ENCODE measurements at regions of chr12 and their contacts with region 1.

Region 1: DNA sequence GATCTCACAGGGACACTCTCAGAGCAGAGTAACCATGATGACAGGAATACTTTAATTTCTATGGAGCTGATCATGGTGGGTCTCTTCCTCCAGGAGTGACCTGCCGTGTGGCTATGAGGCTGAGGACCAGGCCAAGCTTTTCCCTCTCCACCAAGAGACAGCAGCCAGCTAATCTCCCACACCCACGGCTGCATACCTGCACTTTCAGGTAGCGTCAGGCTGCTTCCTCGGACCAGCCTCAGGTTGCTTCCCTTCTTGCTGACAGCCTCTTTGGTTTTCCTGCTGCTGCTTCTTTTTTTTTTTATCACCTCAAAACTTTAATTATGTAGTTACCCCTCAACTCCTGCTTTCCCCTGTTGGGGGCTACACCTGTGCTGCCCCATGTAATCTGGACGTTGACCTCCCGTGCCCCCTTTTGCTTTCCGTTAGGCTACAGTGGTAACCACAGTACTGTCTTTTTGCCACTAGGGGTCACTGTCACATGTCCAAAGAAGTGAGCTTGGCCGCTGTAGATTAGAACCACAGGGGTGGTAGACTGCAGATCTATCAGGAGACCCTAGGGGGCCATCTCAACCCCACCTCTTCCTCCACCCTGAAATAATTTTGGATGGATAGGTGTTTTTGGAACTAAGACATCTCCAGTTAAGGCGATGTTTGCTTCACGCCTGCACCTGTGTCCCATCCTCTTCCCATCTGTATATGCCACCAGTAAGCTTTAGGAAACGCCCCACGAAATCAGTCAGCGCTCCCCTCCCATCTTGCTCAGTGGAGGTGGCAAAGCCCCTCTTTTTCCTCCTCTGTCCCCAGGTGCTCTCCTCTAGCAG is 7.8 kb upstream of the PIP4K2C start:
- DNase-seq: peak; percentile 83
- ATAC-seq: peak; percentile 100
- H3K4me3 Mint-ChIP-seq: no peak overlapping the region
- H3K27ac Mint-ChIP-seq: no peak overlapping the region
- H3K4me1 Mint-ChIP-seq: no peaks in the 10 kb centered on the region
- H3K27me3 Mint-ChIP-seq: no peaks in the 10 kb centered on the region
- CTCF ChIP-seq: peak; percentile 96

Region 2: GRCh38 chr12:57229634-57230380 is 353.4 kb before region 1 on chr12 and contains the start of gene SHMT2:
- CTCF ChIA-PET with region 1: no interaction called
- POLR2A ChIA-PET with region 1: no interaction called
- intact Hi-C with region 1: no loop called
- DNase-seq: peak; percentile 97
- ATAC-seq: peak; percentile 68
- H3K4me3 Mint-ChIP-seq: peak within 1 kb of the TSS; percentile 100
- H3K27ac Mint-ChIP-seq: peak within 1 kb of the TSS; percentile 99
- H3K4me1 Mint-ChIP-seq: peaks cover 74% of the 10 kb centered on the region
- H3K27me3 Mint-ChIP-seq: peaks cover 22% of the 10 kb centered on the region
- CTCF ChIP-seq: no peak
- total RNA-seq, gene SHMT2: 480 to 529 TPM

Region 3: DNA sequence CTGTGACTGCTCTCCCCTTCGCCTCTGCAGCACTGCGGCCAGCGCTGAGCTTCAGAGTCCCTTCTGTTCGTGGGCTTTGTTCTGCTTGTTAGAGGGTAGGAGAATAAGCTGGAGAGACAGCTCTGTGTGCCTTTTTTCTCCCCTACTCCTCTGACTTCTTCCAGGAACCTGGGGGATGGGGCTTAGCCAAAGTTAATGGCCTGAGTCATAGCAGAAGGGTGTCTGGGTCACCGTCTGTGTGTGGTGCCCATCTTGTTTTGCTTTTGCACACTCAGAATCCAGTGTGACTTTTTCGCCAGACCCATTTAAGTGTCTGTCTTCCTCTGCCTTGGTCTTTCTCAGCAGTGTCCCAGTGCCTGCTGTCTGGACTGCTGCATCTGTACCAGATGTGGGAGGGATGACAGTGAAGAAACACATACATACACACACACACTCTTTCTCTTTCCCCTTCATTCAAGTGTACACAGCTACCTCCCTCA is 30.3 kb before region 1 on chr12:
- CTCF ChIA-PET with region 1: interaction called, 16 read pairs
- POLR2A ChIA-PET with region 1: no interaction called
- intact Hi-C with region 1: no loop called
- DNase-seq: no peak
- ATAC-seq: no peak
- H3K4me3 Mint-ChIP-seq: no peak overlapping the region
- H3K27ac Mint-ChIP-seq: no peak overlapping the region
- H3K4me1 Mint-ChIP-seq: peaks cover 12% of the 10 kb centered on the region
- H3K27me3 Mint-ChIP-seq: peaks cover 4% of the 10 kb centered on the region
- CTCF ChIP-seq: no peak

Region 4: DNA sequence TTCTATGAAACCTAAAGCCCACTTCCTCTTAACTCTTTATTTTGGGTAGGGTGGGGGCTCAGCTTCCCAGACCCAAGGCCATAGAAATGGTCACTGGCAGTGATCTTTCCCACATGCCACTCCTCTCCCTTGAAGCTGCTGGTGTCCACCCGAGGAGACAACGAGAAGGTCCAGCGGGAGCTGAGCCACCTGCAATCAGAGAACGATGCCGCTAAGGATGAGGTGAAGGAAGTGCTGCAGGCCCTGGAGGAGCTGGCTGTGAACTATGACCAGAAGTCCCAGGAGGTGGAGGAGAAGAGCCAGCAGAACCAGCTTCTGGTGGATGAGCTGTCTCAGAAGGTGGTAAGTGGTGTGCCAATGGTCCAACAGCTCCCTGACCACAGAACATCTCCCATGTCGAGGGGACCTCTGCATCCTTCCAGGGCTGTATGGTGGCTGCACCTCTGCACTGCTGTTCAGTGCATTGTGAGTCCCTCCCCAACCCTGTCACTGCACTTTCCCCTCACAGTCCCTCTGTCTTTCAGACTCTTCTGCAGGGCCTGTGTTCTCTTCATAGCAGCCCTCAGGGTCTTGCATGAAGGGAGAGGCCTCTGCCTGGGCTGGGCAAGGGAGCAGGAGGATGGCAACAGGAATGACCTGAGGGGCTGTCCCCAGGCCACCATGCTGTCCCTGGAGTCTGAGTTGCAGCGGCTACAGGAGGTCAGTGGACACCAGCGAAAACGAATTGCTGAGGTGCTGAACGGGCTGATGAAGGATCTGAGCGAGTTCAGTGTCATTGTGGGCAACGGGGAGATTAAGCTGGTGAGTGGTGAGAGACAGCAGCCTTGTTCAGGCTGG is 11.1 kb before region 1 on chr12:
- CTCF ChIA-PET with region 1: interaction called, 18 read pairs
- POLR2A ChIA-PET with region 1: interaction called, 3 read pairs
- intact Hi-C with region 1: no loop called
- DNase-seq: no peak
- ATAC-seq: no peak
- H3K4me3 Mint-ChIP-seq: no peak overlapping the region
- H3K27ac Mint-ChIP-seq: no peak overlapping the region
- H3K4me1 Mint-ChIP-seq: no peaks in the 10 kb centered on the region
- H3K27me3 Mint-ChIP-seq: no peaks in the 10 kb centered on the region
- CTCF ChIP-seq: no peak

Region 5: DNA sequence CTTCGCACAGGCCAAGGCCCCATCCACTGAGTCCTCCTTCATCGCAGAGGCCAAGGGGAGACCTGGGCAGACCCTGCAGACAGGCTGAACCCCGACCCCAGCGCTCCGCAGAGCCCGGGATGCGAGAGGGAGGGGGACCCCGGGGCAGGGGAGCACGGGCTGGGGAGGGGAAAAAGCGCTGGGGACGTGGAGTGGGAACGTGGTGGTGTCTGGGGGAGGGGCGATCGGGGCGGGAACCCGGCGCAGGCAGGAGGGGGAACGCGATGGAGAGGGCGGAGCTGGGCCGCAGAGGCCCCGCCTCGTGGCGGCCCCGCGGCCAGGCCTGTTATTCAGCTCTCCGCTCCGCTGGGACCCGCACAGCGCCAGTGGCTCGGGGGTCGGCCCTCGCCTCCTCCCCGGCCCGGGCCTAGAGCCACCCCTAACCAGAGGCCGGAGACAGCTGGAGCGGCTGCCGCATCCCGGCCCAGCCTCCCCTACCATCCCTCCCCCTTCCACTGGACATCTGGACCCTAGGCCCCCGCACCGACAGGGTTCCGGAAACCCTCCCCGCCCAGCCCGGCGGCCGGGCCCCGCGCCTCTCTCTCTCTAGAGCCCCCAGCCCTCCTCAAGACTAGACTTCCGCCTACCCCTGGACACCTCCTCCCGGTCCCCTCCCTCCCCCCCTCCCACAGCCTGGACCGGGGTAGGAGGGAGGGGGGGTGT is 28.0 kb after region 1 on chr12 and contains the start of gene ARHGEF25:
- CTCF ChIA-PET with region 1: interaction called, 60 read pairs
- POLR2A ChIA-PET with region 1: interaction called, 3 read pairs
- intact Hi-C with region 1: no loop called
- DNase-seq: peak; percentile 59
- ATAC-seq: peak; percentile 83
- H3K4me3 Mint-ChIP-seq: peak within 1 kb of the TSS; percentile 70
- H3K27ac Mint-ChIP-seq: no peak within 1 kb of the TSS
- H3K4me1 Mint-ChIP-seq: peaks cover 9% of the 10 kb centered on the region
- H3K27me3 Mint-ChIP-seq: peaks cover 12% of the 10 kb centered on the region
- CTCF ChIP-seq: no peak
- total RNA-seq, gene ARHGEF25: 1.1 to 1.2 TPM

Region 6: GRCh38 chr12:57627501-57628279 is 44.5 kb after region 1 on chr12:
- CTCF ChIA-PET with region 1: interaction called, 124 read pairs
- POLR2A ChIA-PET with region 1: interaction called, 6 read pairs
- intact Hi-C with region 1: loop called (anchors 2 kb)
- DNase-seq: peak; percentile 59
- ATAC-seq: peak; percentile 65
- H3K4me3 Mint-ChIP-seq: peak overlapping the region; percentile 19
- H3K27ac Mint-ChIP-seq: no peak overlapping the region
- H3K4me1 Mint-ChIP-seq: peaks cover 12% of the 10 kb centered on the region
- H3K27me3 Mint-ChIP-seq: peaks cover 88% of the 10 kb centered on the region
- CTCF ChIP-seq: peak; percentile 51

Region 7: DNA sequence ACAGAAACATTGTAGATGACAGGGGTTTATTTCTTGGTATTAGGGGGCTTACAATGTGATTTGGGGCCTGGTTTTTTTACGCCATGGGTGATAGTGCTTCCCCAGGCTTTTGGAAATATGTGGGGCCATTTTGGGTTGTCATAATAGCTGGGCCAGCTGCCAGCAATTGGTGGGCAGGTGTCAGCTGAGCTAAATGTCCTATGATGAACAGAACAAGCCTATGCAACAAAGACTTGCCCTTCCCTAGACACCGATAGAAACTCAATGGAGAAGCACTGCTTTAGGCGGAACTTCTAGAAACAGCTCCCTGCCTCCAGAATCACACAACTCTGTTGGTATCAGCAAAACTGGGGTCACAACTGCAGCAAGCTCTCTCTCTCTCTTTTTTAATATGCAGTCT is 54.9 kb after region 1 on chr12:
- CTCF ChIA-PET with region 1: interaction called, 19 read pairs
- POLR2A ChIA-PET with region 1: no interaction called
- intact Hi-C with region 1: no loop called
- DNase-seq: no peak
- ATAC-seq: no peak
- H3K4me3 Mint-ChIP-seq: no peak overlapping the region
- H3K27ac Mint-ChIP-seq: no peak overlapping the region
- H3K4me1 Mint-ChIP-seq: peaks cover 5% of the 10 kb centered on the region
- H3K27me3 Mint-ChIP-seq: peaks cover 17% of the 10 kb centered on the region
- CTCF ChIP-seq: no peak

Region 8: DNA sequence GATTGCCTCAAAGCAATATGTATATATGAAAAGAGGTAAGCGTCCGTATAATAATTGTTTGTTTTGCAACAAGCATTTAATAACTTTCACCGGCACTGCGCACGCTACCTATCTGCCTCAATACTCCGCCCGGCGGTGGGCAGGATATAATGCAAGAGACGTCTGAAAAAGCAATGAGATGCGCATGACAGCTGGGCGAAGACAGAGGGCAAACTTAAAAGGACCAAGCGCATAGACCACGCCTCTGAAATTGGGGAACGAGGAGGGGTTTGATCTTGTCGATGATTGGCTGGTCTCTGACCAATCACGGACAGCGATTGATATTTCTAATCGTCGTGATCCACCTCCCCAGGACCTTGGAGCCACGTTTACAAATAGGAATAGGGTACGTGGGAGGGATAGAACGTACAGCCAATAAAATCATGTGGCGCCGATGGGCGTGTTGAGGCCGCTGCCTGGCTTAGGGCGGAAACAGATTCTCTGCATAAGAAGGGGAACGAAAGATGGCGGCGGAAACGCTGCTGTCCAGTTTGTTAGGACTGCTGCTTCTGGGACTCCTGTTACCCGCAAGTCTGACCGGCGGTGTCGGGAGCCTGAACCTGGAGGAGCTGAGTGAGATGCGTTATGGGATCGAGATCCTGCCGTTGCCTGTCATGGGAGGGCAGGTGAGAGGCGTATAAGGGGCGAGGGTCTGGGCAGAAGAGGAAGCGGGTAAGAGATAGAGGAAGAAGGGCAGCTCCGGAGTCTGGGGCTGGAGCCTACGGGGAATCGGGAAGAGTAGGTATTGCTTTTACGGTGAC is 110.6 kb after region 1 on chr12 and contains the start of gene OS9:
- CTCF ChIA-PET with region 1: interaction called, 24 read pairs
- POLR2A ChIA-PET with region 1: no interaction called
- intact Hi-C with region 1: loop called (anchors 5 kb)
- DNase-seq: peak; percentile 99
- ATAC-seq: peak; percentile 96
- H3K4me3 Mint-ChIP-seq: no peak within 1 kb of the TSS
- H3K27ac Mint-ChIP-seq: no peak within 1 kb of the TSS
- H3K4me1 Mint-ChIP-seq: no peaks in the 10 kb centered on the region
- H3K27me3 Mint-ChIP-seq: peaks cover under 1% of the 10 kb centered on the region
- CTCF ChIP-seq: peak; percentile 83
- total RNA-seq, gene OS9: 53.0 to 56.3 TPM

Region 9: GRCh38 chr12:58502226-58502625 is 919.0 kb after region 1 on chr12:
- CTCF ChIA-PET with region 1: no interaction called
- POLR2A ChIA-PET with region 1: no interaction called
- intact Hi-C with region 1: no loop called
- DNase-seq: no peak
- ATAC-seq: no peak
- H3K4me3 Mint-ChIP-seq: no peak overlapping the region
- H3K27ac Mint-ChIP-seq: no peak overlapping the region
- H3K4me1 Mint-ChIP-seq: no peaks in the 10 kb centered on the region
- H3K27me3 Mint-ChIP-seq: peaks cover 2% of the 10 kb centered on the region
- CTCF ChIP-seq: no peak

Measured in activated CD8-positive, alpha-beta T cell treated with anti-CD3 and anti-CD28 coated beads for 36 hours (primary cell).